Posterior vena cava (tissue), 2 donors: ENCODE measurements at regions of chr1 and their contacts with region 1.

Region 1: DNA sequence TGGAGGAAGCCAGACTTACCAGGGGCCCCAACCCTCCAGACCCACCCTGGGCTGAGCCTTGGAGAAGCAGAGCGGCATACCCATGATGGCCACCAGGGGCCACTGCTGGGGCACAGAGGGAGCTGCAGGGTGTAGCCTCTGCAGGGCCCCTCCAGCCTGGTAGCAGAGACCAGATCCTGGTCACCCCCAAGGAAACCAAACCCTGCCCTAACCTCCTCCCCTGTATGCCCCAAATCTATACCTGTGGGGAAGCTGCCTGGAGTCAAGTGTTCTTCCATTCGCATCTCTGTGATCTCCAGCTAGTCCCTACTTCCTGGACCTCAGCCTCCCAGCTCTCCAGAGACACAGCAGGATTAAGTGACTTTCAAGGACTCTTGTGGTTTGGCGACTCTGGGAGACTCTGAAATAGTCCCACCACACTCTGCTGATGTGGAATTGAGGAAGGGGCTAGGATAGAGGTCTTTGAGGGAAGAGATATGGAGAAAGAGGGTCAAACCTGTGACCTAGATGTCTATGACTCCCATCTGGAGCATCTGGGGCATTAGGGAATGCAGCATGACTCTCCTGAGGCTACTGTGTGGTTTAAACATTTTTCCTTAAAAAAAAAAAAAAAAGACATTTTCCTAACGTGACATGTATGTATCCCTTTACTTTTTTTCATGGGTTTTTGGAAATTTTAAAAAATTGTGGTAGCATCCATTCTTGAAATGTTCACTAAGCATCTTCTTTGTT is 119.2 kb upstream of the IPO9 start:
- DNase-seq: peak; percentile 90

Region 2: DNA sequence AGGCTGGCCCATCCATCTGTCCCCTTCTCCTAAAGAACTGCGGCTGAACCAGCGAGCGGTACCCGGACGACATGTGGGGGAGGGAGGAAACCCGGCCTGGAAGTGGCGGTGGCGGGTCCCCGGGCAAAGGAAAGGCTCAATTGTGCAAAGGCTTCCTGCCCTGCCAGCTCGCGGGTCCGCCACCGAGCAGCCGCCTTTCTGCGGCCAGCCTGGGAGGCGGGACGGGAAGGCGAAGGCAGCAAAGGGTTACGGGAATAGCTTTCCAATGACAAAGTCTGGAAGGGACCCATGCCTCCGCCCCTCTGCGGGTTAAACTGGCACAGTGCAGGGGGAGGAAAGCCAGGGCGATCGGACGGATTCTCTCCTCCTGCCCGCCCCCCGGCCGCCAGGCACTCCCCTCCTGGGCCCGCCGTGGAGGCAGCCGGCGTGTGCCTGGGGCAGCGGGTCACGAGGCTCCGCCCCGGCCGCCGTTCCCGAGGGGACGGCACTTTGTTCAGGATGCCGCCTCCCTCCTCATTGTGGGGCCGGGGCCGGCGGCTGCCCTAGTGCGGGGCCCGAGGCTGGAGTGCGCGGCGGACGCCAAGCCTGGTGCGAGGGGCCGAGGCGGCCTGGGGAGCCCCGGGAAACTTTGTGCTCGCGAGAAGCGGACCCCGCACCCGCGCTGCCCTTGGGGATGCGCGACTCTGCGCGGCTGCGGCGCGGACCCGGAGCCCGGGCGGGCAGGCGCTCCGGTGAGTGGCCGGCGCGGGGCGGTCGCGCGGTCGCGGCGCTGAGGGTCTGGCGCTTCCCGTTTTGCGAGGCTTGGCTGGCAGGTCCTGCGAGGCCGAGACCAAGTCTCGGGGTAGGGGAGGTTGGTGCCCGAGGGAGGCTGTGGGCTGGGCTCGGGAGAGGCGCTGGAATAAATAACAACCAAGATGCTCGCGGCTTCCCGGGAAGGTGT is 170.8 kb before region 1 on chr1 and contains the start of gene NAV1:
- intact Hi-C with region 1: loop called in 1 of 2 experiments (anchors 5 kb)
- DNase-seq: peak; percentile 93
- total RNA-seq, gene NAV1: 85.0 to 96.0 TPM

Region 3: GRCh38 chr1:201559679-201560162 is 150.0 kb before region 1 on chr1:
- intact Hi-C with region 1: loop called (anchors 2 to 5 kb)
- DNase-seq: peak; percentile 94

Region 4: DNA sequence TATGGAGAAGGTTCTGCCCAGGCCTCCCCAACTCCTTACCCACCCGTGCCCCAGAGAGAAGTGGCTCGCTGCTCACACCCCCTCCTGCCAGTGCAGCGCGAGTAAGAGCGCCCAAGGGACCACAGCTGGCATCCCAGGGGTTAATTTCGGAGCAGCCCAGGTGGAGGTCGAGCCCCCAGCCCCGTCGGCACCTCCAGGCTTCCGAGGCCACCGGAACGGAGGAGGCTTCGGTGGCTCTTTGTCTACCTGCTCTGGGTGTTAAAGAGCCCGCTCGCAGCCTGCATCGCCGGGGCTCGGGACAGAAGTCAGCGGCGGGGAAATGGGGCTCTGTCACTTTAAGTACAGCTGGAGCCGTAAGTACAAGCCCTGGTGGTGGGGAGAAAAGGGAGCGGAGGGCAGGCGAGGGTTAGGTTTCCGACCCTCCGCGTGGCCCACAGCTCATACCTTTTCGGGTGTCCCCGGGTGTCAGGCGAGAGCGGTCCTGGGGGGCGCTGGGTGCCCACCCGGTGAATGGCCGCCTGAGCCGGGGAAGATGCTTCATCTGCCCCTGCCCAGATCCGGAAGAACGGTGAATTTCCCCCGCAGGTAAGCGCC is 29.9 kb after region 1 on chr1:
- intact Hi-C with region 1: loop called in 1 of 2 experiments (anchors 1 kb)
- DNase-seq: peak; percentile 85

Region 5: DNA sequence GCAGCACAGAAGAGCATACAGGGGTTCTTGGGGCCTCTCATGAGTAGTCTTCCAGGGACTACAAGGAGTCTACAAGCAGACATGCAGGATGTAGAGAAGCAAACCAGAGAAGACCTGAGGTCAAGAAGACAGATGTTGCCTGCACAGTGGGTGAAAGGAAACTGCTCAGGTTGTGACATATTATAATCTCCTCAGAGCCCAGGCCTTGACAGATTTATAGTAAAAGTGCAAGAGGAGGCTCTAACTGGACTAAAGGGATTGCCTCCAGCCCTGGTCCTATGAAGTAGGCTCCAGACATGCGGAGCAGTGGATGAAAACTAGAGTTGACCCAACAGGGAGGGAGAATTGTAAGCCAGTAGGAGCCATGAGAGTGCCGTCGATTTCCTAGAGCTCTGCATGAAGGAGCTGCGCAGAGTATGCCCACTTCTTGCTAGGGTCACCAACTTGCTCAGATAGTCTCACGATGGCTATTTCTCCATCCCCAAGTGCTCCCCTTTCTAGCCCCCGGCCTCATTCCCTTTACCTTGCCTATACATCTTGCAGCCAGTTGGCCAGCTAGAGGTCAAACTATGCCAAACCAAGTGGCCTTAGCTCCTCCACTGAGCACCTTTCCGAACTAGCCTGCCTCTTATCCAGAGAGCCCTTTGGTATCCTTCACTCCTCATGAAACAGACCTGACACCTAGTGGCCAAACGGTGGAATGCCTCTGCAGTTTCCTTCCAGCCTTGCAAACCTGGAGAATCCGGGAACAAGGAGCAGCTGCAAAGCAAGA is 83.0 kb after region 1 on chr1:
- intact Hi-C with region 1: loop called (anchors 2 kb)
- DNase-seq: no peak